Kidney (tissue), 22 donors: ENCODE measurements at regions of chr1 and their contacts with region 1.

Region 1: GRCh38 chr1:19918057-19918456 is 5.4 kb downstream of the PLA2G2E start:
- DNase-seq: peak; percentile 83 to 94 (median 87)
- H3K4me3 ChIP-seq: no peak overlapping the region
- H3K27ac ChIP-seq: no peak overlapping the region
- H3K4me1 ChIP-seq: peaks cover 0 to 2% (median 0%) of the 10 kb centered on the region in 3 donors
- H3K27me3 ChIP-seq: no peaks in the 10 kb centered on the region
- CTCF ChIP-seq: peak; percentile 89

Region 2: GRCh38 chr1:20151906-20152598 is 234.0 kb after region 1 on chr1:
- intact Hi-C with region 1: loop called (anchors 5 kb)
- DNase-seq: peak; percentile 77 to 93 (median 87)
- H3K4me3 ChIP-seq: peak overlapping the region in 2 of 3 donors; percentile 50 to 57
- H3K27ac ChIP-seq: no peak overlapping the region
- H3K4me1 ChIP-seq: peaks cover 0 to 4% (median 0%) of the 10 kb centered on the region in 3 donors
- H3K27me3 ChIP-seq: no peaks in the 10 kb centered on the region
- CTCF ChIP-seq: peak; percentile 89